Naive thymus-derived CD4-positive, alpha-beta T cell (primary cell): ENCODE measurements at regions of chr6 and their contacts with region 1.

Region 1: GRCh38 chr6:153023977-153024708 is 21.6 kb upstream of the MTRF1L start:
- DNase-seq: peak in 8 of 9 donors; percentile 25 to 58 (median 48)
- ATAC-seq: peak; percentile 91
- H3K4me3 ChIP-seq: no peak overlapping the region
- H3K4me3 Mint-ChIP-seq: no peak overlapping the region
- H3K27ac ChIP-seq: no peak overlapping the region
- H3K27ac Mint-ChIP-seq: no peak overlapping the region
- H3K4me1 ChIP-seq: no peaks in the 10 kb centered on the region
- H3K4me1 Mint-ChIP-seq: peaks cover 0 to 6% (median 3%) of the 10 kb centered on the region in 7 donors
- H3K27me3 ChIP-seq: no peaks in the 10 kb centered on the region
- H3K27me3 Mint-ChIP-seq: peaks cover 17 to 41% (median 20%) of the 10 kb centered on the region in 5 donors

Region 2: GRCh38 chr6:152323376-152323775 is 700.8 kb before region 1 on chr6:
- CTCF ChIA-PET with region 1: no interaction called
- POLR2A ChIA-PET with region 1: no interaction called
- intact Hi-C with region 1: no loop called
- DNase-seq: no peak
- ATAC-seq: no peak
- H3K4me3 ChIP-seq: no peak overlapping the region
- H3K4me3 Mint-ChIP-seq: no peak overlapping the region
- H3K27ac ChIP-seq: no peak overlapping the region
- H3K27ac Mint-ChIP-seq: no peak overlapping the region
- H3K4me1 ChIP-seq: no peaks in the 10 kb centered on the region
- H3K4me1 Mint-ChIP-seq: peaks cover 0 to 2% (median 0%) of the 10 kb centered on the region in 7 donors
- H3K27me3 ChIP-seq: no peaks in the 10 kb centered on the region
- H3K27me3 Mint-ChIP-seq: peaks cover 0 to 35% (median 8%) of the 10 kb centered on the region in 5 donors

Region 3: DNA sequence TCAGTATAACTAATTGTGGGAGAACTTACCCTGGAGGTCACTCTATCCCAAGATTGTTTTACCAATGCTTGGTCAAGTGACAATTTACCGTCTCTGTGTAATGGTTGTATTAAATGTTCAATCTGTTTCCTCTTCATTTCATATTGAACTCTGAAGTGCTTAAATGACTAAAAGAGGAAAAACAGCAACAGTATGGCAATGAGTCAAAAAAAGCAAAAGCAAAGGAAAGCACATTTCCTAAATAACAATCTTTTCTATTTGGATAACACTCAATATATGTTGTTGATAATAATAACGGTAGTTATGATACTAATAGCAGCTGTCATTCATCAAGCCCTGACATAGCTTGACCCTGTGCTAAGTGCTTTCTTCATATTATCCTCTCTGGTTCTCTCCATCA is 539.3 kb before region 1 on chr6:
- CTCF ChIA-PET with region 1: no interaction called
- POLR2A ChIA-PET with region 1: no interaction called
- intact Hi-C with region 1: loop called in 1 of 2 experiments (anchors 5 kb)
- DNase-seq: no peak
- ATAC-seq: no peak
- H3K4me3 ChIP-seq: no peak overlapping the region
- H3K4me3 Mint-ChIP-seq: no peak overlapping the region
- H3K27ac ChIP-seq: no peak overlapping the region
- H3K27ac Mint-ChIP-seq: no peak overlapping the region
- H3K4me1 ChIP-seq: no peaks in the 10 kb centered on the region
- H3K4me1 Mint-ChIP-seq: no peaks in the 10 kb centered on the region
- H3K27me3 ChIP-seq: no peaks in the 10 kb centered on the region
- H3K27me3 Mint-ChIP-seq: peaks cover 0 to 10% (median 0%) of the 10 kb centered on the region in 5 donors

Region 4: DNA sequence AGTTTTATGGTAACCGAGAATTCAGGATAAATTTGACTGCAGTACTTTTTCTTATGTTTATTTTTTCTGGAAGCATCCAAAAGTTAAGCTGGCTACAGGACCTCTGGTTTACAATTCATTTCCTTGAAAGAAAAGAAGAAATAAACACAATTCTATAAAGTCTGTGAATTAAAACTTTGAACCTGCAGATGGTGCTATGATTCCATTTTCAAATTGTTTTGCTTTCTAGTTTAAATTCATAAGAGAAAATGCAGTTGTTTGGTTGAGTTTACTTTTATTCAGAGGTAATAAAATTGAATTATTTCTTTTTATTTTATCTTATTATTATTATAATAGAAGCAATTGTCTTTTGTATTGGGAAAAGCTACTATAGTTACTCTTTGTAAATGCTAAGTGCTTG is 275.3 kb before region 1 on chr6:
- CTCF ChIA-PET with region 1: no interaction called
- POLR2A ChIA-PET with region 1: no interaction called
- intact Hi-C with region 1: loop called in 1 of 2 experiments (anchors 2 kb)
- DNase-seq: no peak
- ATAC-seq: no peak
- H3K4me3 ChIP-seq: no peak overlapping the region
- H3K4me3 Mint-ChIP-seq: no peak overlapping the region
- H3K27ac ChIP-seq: no peak overlapping the region
- H3K27ac Mint-ChIP-seq: no peak overlapping the region
- H3K4me1 ChIP-seq: no peaks in the 10 kb centered on the region
- H3K4me1 Mint-ChIP-seq: no peaks in the 10 kb centered on the region
- H3K27me3 ChIP-seq: no peaks in the 10 kb centered on the region
- H3K27me3 Mint-ChIP-seq: peaks cover 0 to 5% (median 0%) of the 10 kb centered on the region in 5 donors

Region 5: GRCh38 chr6:152948150-152948768 is 75.9 kb before region 1 on chr6:
- CTCF ChIA-PET with region 1: interaction called, 4 read pairs
- POLR2A ChIA-PET with region 1: no interaction called
- intact Hi-C with region 1: loop called in 1 of 2 experiments (anchors 1 kb)
- DNase-seq: peak in 5 of 9 donors; percentile 9 to 35 (median 26)
- ATAC-seq: peak; percentile 72
- H3K4me3 ChIP-seq: no peak overlapping the region
- H3K4me3 Mint-ChIP-seq: peak overlapping the region in 7 of 10 donors; percentile 3 to 56 (median 41)
- H3K27ac ChIP-seq: no peak overlapping the region
- H3K27ac Mint-ChIP-seq: no peak overlapping the region
- H3K4me1 ChIP-seq: no peaks in the 10 kb centered on the region
- H3K4me1 Mint-ChIP-seq: peaks cover 0 to 11% (median 9%) of the 10 kb centered on the region in 7 donors
- H3K27me3 ChIP-seq: peaks cover 0 to 7% of the 10 kb centered on the region in 2 donors
- H3K27me3 Mint-ChIP-seq: peaks cover 17 to 44% (median 25%) of the 10 kb centered on the region in 5 donors

Region 6: GRCh38 chr6:152982768-152983636 is 41.1 kb before region 1 on chr6 and contains the start of gene FBXO5:
- CTCF ChIA-PET with region 1: no interaction called
- POLR2A ChIA-PET with region 1: no interaction called
- intact Hi-C with region 1: loop called (anchors 2 kb)
- DNase-seq: peak; percentile 94 to 98 (median 96)
- ATAC-seq: peak; percentile 97
- H3K4me3 ChIP-seq: peak within 1 kb of the TSS; percentile 94
- H3K4me3 Mint-ChIP-seq: peak within 1 kb of the TSS; percentile 92 to 100 (median 96)
- H3K27ac ChIP-seq: peak within 1 kb of the TSS; percentile 89
- H3K27ac Mint-ChIP-seq: peak within 1 kb of the TSS; percentile 87 to 99 (median 95)
- H3K4me1 ChIP-seq: peaks cover 10 to 20% of the 10 kb centered on the region in 2 donors
- H3K4me1 Mint-ChIP-seq: peaks cover 33 to 58% (median 43%) of the 10 kb centered on the region in 7 donors
- H3K27me3 ChIP-seq: no peaks in the 10 kb centered on the region
- H3K27me3 Mint-ChIP-seq: no peaks in the 10 kb centered on the region
- total RNA-seq, gene FBXO5: 3.2 to 50.2 (median 9.2) TPM

Region 7: GRCh38 chr6:153044295-153044694 is 20.2 kb after region 1 on chr6:
- CTCF ChIA-PET with region 1: no interaction called
- POLR2A ChIA-PET with region 1: no interaction called
- intact Hi-C with region 1: no loop called
- DNase-seq: no peak
- ATAC-seq: no peak
- H3K4me3 ChIP-seq: no peak overlapping the region
- H3K4me3 Mint-ChIP-seq: no peak overlapping the region
- H3K27ac ChIP-seq: no peak overlapping the region
- H3K27ac Mint-ChIP-seq: no peak overlapping the region
- H3K4me1 ChIP-seq: no peaks in the 10 kb centered on the region
- H3K4me1 Mint-ChIP-seq: peaks cover 0 to 3% (median 0%) of the 10 kb centered on the region in 7 donors
- H3K27me3 ChIP-seq: no peaks in the 10 kb centered on the region
- H3K27me3 Mint-ChIP-seq: peaks cover 0 to 6% (median 2%) of the 10 kb centered on the region in 5 donors

Region 8: GRCh38 chr6:153568628-153569027 is 544.5 kb after region 1 on chr6:
- CTCF ChIA-PET with region 1: no interaction called
- POLR2A ChIA-PET with region 1: no interaction called
- intact Hi-C with region 1: no loop called
- DNase-seq: no peak
- ATAC-seq: no peak
- H3K4me3 ChIP-seq: no peak overlapping the region
- H3K4me3 Mint-ChIP-seq: no peak overlapping the region
- H3K27ac ChIP-seq: no peak overlapping the region
- H3K27ac Mint-ChIP-seq: no peak overlapping the region
- H3K4me1 ChIP-seq: no peaks in the 10 kb centered on the region
- H3K4me1 Mint-ChIP-seq: no peaks in the 10 kb centered on the region
- H3K27me3 ChIP-seq: no peaks in the 10 kb centered on the region
- H3K27me3 Mint-ChIP-seq: no peaks in the 10 kb centered on the region

Region 9: DNA sequence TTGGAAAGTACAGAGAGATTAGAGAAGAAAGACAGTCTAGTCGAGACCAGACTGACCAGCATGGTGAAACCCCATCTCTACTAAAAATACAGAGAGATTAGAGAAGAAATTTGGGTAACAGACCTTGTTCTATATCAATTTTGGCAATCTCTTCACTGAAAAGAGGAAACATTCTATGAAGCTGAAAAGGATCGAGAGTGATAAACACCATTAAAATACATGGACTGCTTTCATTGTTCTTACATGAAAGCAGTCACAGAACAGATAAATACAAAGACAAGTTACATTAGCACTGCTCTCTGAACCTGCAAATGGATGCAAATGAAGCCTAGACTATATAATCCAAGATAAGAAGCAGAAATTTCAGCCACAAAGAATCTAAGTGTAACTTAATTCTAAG is 1006.5 kb after region 1 on chr6:
- CTCF ChIA-PET with region 1: no interaction called
- POLR2A ChIA-PET with region 1: no interaction called
- intact Hi-C with region 1: no loop called
- DNase-seq: no peak
- ATAC-seq: no peak
- H3K4me3 ChIP-seq: no peak overlapping the region
- H3K4me3 Mint-ChIP-seq: no peak overlapping the region
- H3K27ac ChIP-seq: no peak overlapping the region
- H3K27ac Mint-ChIP-seq: no peak overlapping the region
- H3K4me1 ChIP-seq: no peaks in the 10 kb centered on the region
- H3K4me1 Mint-ChIP-seq: no peaks in the 10 kb centered on the region
- H3K27me3 ChIP-seq: peaks cover 0 to 3% of the 10 kb centered on the region in 2 donors
- H3K27me3 Mint-ChIP-seq: peaks cover 0 to 27% (median 6%) of the 10 kb centered on the region in 5 donors